Aorta (tissue), 5 donors: ENCODE measurements at regions of chr2 and their contacts with region 1.

Region 1: DNA sequence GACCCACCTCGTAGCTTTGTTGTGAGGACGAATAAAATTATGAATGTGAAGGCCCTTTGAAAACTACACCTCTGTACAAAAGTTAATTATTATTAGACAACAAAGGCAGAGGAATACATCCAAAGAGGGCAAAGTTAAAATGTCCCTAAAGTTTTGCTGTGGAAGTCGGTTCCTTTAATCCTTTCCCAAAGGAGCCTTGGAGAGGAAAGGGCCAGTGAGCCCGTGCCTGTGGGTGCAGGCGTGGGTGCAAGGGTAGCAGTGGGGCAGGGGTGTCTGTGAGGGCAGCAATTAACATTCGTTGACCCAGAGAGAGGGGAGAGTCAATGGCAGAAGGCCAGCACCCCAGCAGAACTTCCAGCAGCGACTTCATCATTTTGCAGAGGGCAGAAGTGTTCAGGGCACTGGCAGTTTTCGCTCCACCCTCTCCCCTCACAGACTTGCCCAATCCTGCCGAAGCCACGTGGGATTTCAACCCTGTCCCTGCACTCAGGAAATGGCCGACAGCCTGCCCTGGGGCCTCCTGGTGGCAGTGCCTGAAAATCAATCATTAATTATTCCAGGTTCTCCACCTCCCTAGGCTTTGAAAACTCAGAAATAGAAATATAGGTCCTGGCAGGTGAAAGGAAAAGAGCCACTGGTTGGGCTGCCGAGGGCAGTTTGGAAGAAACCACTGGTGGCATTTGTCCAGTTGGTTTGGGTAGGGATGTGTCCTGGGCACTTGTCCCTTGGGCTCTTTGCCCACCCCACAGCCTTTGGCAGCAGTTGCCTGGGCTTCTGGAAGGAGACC is 4.2 kb upstream of the PAX8 start:
- DNase-seq: peak; percentile 75 to 80
- ATAC-seq: peak; percentile 4
- H3K4me3 ChIP-seq: no peak overlapping the region
- H3K27ac ChIP-seq: peak overlapping the region; percentile 70 to 91
- H3K4me1 ChIP-seq: peaks cover 0 to 8% of the 10 kb centered on the region in 2 donors
- H3K27me3 ChIP-seq: no peaks in the 10 kb centered on the region

Region 2: GRCh38 chr2:113248997-113249770 is 33.8 kb before region 1 on chr2:
- intact Hi-C with region 1: loop called in 1 of 2 experiments (anchors 5 kb)
- DNase-seq: peak; percentile 86 to 91
- ATAC-seq: peak; percentile 84
- H3K4me3 ChIP-seq: no peak overlapping the region
- H3K27ac ChIP-seq: no peak overlapping the region
- H3K4me1 ChIP-seq: no peaks in the 10 kb centered on the region
- H3K27me3 ChIP-seq: no peaks in the 10 kb centered on the region

Region 3: GRCh38 chr2:113324684-113325160 is 41.8 kb after region 1 on chr2:
- intact Hi-C with region 1: loop called in 1 of 2 experiments (anchors 5 kb)
- DNase-seq: peak in 1 of 2 donors; percentile 83
- ATAC-seq: peak; percentile 70
- H3K4me3 ChIP-seq: peak overlapping the region; percentile 49 to 75
- H3K27ac ChIP-seq: no peak overlapping the region
- H3K4me1 ChIP-seq: no peaks in the 10 kb centered on the region
- H3K27me3 ChIP-seq: no peaks in the 10 kb centered on the region